Common myeloid progenitor, CD34-positive (primary cell): ENCODE measurements at regions of chr10 and their contacts with region 1.

Region 1: DNA sequence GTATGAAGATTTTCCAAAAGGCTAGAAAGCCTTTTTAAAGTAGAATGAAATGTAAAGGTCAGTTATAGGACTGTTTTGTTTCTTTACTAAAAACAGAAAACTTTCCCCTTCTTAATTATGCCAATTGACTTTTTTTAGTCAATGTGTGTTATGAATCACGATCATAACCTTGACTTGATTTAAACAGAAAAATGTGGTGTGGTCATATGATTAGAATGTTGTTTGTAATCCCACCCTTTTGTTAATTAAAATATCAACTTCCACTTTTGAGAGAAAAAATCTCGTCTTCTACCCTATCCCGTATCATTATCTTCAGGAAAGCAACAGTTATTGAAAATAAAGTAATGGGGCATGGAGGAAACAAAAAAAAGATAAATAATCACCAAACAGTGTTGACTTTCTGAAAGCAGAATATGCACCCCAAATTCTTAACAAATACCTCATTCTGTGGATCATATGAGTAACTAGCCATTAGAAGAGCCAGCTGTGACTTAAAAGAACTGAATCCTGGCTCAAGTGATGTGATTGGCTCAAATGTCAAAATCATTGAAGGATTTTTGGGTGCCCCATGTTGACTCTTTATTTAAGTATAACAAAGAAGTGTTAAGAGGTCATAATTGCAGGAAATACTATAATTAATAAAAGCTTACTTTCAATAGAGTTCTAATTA is 32.3 kb upstream of the SLC16A12 start:
- DNase-seq: no peak
- H3K4me3 ChIP-seq: no peak overlapping the region
- H3K27ac ChIP-seq: no peak overlapping the region
- H3K4me1 ChIP-seq: no peaks in the 10 kb centered on the region
- H3K27me3 ChIP-seq: peaks cover 0 to 1% (median 0%) of the 10 kb centered on the region in 5 experiments

Region 2: DNA sequence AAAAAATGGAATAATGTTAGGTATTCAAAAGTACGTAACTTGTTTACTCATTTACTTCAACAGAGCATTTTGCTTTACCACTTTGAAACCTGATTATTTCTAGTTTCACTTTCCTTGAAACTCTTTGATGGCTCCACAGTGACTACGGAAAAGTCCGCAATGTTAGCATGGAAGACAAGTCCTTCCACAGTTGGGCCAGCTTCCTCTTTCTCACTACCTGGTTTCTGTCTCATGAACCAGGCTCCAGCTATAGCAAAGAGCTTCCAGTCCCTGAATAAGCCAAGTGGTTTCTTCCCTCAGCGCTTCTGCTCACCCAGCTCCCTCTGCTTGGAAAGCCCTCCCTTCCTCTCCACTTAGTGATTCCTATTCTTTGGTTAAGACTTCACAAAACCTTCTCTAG is 12.5 kb after region 1 on chr10:
- CTCF ChIA-PET with region 1: interaction called, 10 read pairs
- POLR2A ChIA-PET with region 1: no interaction called
- DNase-seq: peak in 1 of 3 donors; percentile 5
- H3K4me3 ChIP-seq: no peak overlapping the region
- H3K27ac ChIP-seq: no peak overlapping the region
- H3K4me1 ChIP-seq: no peaks in the 10 kb centered on the region
- H3K27me3 ChIP-seq: no peaks in the 10 kb centered on the region